PC-3 (cell line): ENCODE measurements at regions of chr1 and their contacts with region 1.

Region 1: DNA sequence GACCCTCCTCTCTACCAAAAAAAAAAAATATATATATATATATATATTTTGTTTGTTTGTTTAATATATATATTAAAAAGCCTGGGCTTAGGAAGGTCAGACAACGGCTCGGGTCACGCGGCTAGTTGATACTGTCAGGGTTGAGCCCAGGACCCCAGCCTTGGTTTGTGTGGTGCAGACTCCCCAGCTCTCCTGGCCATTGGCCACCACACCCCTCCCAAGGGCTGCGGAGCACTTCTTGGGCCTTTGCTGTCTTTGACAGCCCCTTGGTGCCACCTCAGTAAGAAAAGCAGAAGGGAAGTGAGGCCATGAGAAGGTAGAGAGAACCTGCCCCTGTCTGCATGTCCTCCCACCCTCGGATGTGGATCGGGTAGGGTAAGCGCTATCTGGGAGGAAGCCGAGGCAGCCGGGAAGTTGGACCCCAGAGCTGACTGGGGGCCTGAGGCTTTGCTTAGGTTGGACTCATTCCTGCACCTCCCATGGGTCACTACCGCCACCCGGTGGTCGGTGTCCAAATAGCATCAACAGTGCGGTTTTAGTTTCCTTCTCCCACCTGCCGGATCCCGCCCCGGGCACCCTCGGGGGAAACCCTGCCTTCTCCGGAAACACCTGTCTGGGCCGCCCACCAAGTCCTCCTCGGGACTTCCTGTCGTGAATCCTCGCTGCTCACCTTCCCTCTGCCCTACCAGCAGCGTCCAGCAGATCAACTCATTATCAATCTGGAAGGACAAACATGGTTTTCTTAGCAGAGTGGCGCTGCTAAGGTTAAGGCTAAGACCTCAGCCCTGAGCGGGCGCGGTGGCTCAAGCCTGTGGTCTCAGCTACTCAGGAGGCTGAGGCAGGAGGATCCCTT is 29.8 kb upstream of the GNPAT start:
- DNase-seq: peak; percentile 97
- ATAC-seq: peak; percentile 88
- H3K4me3 ChIP-seq: peak overlapping the region; percentile 74
- H3K27ac ChIP-seq: no peak overlapping the region
- H3K4me1 ChIP-seq: 0 out of 2 replicates have a peak, but pooled peaks cover 6% of the 10 kb centered on the region
- H3K27me3 ChIP-seq: peaks cover 3% of the 10 kb centered on the region
- CTCF ChIP-seq: peak; percentile 96

Region 2: GRCh38 chr1:230681599-230681998 is 529.6 kb before region 1 on chr1:
- CTCF ChIA-PET with region 1: interaction called, 18 read pairs
- POLR2A ChIA-PET with region 1: no interaction called
- intact Hi-C with region 1: no loop called
- DNase-seq: peak; percentile 100
- ATAC-seq: peak; percentile 98
- H3K4me3 ChIP-seq: no peak overlapping the region
- H3K27ac ChIP-seq: peak overlapping the region; percentile 71
- H3K4me1 ChIP-seq: peaks cover 43% of the 10 kb centered on the region
- H3K27me3 ChIP-seq: no peaks in the 10 kb centered on the region
- CTCF ChIP-seq: no peak

Region 3: DNA sequence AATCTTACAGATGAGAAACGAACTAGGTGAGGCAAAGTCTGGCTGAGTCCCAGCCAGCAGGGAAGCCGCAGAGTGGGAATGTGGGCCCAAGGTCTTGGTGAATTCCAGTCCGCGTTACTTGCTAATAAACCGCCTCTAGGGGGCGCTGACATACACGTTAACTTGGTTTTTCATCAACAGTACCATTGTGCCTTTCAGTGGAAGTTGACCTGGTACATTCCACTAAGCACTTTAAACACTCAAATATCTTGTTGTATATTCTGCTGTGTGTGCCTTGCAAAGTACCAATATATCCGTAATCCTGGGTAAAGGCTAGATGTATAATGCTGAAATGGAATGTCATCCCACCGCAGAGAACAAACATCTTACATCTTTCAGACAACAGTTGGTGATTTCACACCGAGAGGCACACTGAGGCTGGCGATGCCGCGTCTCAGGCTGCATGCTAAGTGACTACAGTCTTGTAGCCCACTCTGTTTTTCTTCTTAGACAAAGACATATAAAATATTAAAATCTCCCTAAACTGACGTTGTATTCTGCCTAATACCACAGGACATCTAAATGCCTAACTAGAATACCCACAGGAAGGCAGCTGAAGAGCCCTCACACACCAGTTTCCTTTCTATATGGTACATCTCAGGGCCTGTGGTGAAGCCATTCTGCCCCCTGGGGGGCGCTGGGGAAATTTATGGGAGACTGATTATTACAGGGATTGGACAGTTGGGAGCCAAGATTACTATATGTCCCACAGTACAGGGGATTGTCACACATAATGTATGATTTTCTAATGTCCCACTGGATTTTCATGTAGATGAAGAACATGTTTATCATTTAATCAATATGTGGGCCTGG is 293.7 kb before region 1 on chr1:
- CTCF ChIA-PET with region 1: no interaction called
- POLR2A ChIA-PET with region 1: no interaction called
- intact Hi-C with region 1: loop called (anchors 1 kb)
- DNase-seq: peak; percentile 88
- ATAC-seq: peak; percentile 78
- H3K4me3 ChIP-seq: no peak overlapping the region
- H3K27ac ChIP-seq: no peak overlapping the region
- H3K4me1 ChIP-seq: no peaks in the 10 kb centered on the region
- H3K27me3 ChIP-seq: no peaks in the 10 kb centered on the region
- CTCF ChIP-seq: peak; percentile 85

Region 4: DNA sequence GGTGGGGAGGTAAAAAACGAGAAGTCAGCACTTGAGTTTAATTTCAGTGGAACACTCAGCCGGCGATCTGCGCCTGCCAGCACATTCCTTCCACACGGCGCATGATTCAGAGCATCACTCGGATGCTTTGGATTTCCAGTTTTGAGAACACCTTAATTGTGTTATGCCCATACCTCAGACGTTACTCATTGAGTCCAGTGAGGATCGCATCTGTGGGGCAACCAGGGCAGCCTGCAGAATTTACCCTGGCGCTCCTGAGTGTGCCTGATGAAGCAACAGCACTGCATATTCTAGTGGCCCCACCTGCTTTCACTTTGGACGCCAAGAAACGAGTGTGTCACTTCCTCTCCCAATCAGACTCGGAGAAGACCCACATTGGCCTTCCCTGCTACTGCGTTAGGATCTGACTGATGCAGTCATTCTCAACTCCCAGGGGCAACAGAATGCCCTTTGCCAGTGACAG is 191.1 kb before region 1 on chr1:
- CTCF ChIA-PET with region 1: interaction called, 5 read pairs
- POLR2A ChIA-PET with region 1: no interaction called
- intact Hi-C with region 1: loop called (anchors 1 kb)
- DNase-seq: peak; percentile 78
- ATAC-seq: peak; percentile 64
- H3K4me3 ChIP-seq: peak overlapping the region; percentile 45
- H3K27ac ChIP-seq: no peak overlapping the region
- H3K4me1 ChIP-seq: peaks cover 17% of the 10 kb centered on the region
- H3K27me3 ChIP-seq: no peaks in the 10 kb centered on the region
- CTCF ChIP-seq: peak; percentile 45; the same call in 1 of the 2 replicates

Region 5: DNA sequence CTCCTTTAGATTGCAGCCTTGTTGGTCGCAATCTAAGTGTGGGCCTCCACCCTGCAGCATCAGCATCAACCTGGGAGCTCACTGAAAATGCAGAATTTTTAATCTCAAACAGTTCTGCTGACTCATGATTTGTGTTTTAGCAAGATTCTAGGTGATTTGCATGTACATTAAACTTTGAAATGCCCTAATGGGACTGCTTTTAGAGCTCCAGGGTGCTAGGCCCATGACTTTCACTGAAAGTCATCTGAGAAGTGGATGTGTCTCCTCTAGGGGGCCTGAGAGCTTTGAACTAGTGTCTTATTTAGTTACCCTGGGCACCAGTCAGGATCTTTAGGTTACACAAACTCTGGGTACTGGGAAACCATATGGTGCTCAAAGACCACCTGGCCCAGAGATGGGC is 40.4 kb before region 1 on chr1:
- CTCF ChIA-PET with region 1: no interaction called
- POLR2A ChIA-PET with region 1: no interaction called
- intact Hi-C with region 1: no loop called
- DNase-seq: no peak
- ATAC-seq: no peak
- H3K4me3 ChIP-seq: no peak overlapping the region
- H3K27ac ChIP-seq: no peak overlapping the region
- H3K4me1 ChIP-seq: peaks cover 17% of the 10 kb centered on the region
- H3K27me3 ChIP-seq: peaks cover 29% of the 10 kb centered on the region
- CTCF ChIP-seq: peak; percentile 49

Region 6: DNA sequence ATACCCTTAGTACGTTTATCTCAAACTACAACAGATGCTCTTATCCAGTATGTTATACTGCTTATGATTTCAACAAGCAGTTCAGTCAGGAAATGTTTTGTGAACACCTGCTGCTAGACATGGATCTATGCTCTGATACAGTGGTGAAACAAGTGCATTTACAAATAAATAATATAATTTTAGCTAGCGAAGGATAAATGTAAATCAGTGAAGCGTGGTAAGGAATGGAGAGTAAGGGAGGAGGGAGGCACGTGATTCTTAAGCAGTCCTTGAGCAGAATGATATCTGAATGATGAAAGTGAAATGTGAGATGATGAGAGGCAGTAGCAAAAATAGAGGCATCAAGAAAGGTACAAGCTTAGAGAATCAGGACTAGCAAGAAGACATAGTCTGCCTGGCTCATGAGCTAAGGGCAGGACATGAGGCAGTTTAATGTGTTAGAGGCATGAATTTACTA is 323.5 kb after region 1 on chr1:
- CTCF ChIA-PET with region 1: no interaction called
- POLR2A ChIA-PET with region 1: no interaction called
- intact Hi-C with region 1: no loop called
- DNase-seq: no peak
- ATAC-seq: no peak
- H3K4me3 ChIP-seq: no peak overlapping the region
- H3K27ac ChIP-seq: no peak overlapping the region
- H3K4me1 ChIP-seq: peaks cover 5% of the 10 kb centered on the region
- H3K27me3 ChIP-seq: no peaks in the 10 kb centered on the region
- CTCF ChIP-seq: no peak